ENCODE measurements at regions of chr12 and their contacts with region 1.

Region 1: DNA sequence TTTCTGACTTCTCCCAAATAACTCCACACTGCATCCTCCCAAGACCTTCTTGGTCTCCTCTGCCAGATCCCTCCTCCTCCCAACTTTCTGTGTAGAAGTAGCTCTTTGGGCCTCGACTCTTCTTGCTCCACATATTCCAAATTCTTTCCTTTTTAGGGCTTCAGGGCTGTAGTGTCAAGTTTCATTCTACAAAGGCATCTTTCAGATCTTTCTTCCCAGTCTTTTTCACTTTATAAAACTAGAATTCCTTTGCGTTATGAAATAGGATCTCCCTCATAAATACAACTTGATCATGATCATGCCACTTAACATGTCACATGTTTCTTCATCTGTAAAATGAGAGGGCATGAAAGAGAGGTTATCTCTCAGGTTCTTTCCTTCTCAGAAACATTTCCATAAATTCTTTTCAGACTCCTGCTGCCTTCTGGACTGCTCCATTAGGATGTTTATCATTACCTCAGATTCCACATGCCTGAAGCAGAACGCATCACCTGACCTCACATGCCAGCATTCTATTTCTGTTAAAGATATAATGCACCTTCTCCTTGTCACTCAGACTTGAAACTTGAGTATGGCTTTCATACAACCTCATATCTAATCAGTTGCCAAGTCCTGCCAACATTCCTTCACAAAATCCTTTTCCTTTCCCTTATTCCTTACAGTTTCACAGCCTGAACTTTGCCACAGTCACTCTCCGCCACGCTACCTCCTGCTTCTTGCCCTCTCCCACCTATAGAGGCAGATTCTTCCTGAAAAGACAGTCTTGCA is 8.5 kb downstream of the SLC38A1 start:
- DNase-seq: no peak
- H3K4me3 ChIP-seq: peak overlapping the region in 1 of 4 experiments; percentile 41; a peak in 1 of 8 replicates
- H3K27ac ChIP-seq: peak overlapping the region; percentile 20; the same call in 1 of the 2 replicates
- H3K4me1 ChIP-seq: peaks cover 16 to 34% (median 32%) of the 10 kb centered on the region in 4 experiments
- H3K27me3 ChIP-seq: no peaks in the 10 kb centered on the region
- CTCF ChIP-seq: no peak
- EP300 ChIP-seq: no peak
- POLR2A ChIP-seq: peak in 1 of 2 experiments; percentile 60; a peak in 1 of 3 replicates
- RAD21 ChIP-seq: no peak

Region 2: DNA sequence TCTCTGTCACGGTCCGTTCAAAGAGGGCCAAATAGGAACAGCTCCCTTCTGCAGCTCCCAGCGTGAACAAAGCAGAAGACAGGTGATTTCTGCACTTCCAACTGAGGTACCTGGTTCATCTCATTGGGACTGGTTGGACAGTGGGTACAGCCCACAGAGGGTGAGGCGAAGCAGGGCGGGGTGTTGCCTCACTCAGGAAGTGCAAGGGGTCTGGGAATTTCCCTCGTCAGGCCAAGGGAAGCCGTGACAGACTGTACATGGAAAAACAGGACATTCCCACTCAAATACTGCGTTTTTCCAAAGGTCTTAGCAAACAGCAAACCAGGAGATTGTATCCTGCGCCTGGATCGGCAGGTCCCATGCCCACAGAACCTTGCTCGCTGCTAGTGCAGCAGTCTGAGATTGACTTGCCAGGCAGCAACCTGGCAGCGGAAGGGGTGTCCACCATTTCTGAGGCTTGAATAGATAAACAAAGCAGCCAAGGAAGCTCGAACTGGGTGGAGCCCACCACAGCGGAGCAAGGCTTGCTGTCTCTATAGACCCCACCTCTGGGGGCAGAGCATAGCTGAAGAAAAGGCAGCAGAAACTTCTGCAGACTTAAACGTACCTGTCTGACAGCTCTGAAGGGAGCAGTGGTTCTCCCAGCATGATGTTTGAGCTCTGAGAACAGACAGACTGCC is 14.2 kb before region 1 on chr12:
- CTCF ChIA-PET with region 1: interaction called, 8 read pairs
- POLR2A ChIA-PET with region 1: interaction called, 57 read pairs
- DNase-seq: no peak
- H3K4me3 ChIP-seq: no peak overlapping the region
- H3K27ac ChIP-seq: no peak overlapping the region
- H3K4me1 ChIP-seq: no peaks in the 10 kb centered on the region; a peak in 1 of 7 replicates
- H3K27me3 ChIP-seq: no peaks in the 10 kb centered on the region
- CTCF ChIP-seq: no peak
- EP300 ChIP-seq: no peak
- POLR2A ChIP-seq: 0 out of 3 replicates have a peak, but pooled peaks of 1 of the 2 experiments have one; percentile 13
- RAD21 ChIP-seq: no peak

Measured in H1 (cell line).